Activated CD4-positive, alpha-beta memory T cell treated with anti-CD3 and anti-CD28 coated beads, Interleukin-2, amount 10 ng/mL, durations not matched to agents 7 days and 5 days (primary cell): ENCODE measurements at regions of chr3 and their contacts with region 1.

Region 1: GRCh38 chr3:44529927-44530326 is 25.1 kb upstream of the ZKSCAN7 start:
- DNase-seq: peak; percentile 24
- H3K4me3 Mint-ChIP-seq: no peak overlapping the region
- H3K27ac Mint-ChIP-seq: no peak overlapping the region
- H3K4me1 Mint-ChIP-seq: no peaks in the 10 kb centered on the region
- H3K27me3 Mint-ChIP-seq: peaks cover 7% of the 10 kb centered on the region

Region 2: GRCh38 chr3:44576613-44577012 is 46.7 kb after region 1 on chr3:
- CTCF ChIA-PET with region 1: no interaction called
- POLR2A ChIA-PET with region 1: no interaction called
- DNase-seq: no peak
- H3K4me3 Mint-ChIP-seq: no peak overlapping the region
- H3K27ac Mint-ChIP-seq: no peak overlapping the region
- H3K4me1 Mint-ChIP-seq: no peaks in the 10 kb centered on the region
- H3K27me3 Mint-ChIP-seq: no peaks in the 10 kb centered on the region

Region 3: GRCh38 chr3:44913868-44914468 is 384.0 kb after region 1 on chr3:
- CTCF ChIA-PET with region 1: interaction called, 34 read pairs
- POLR2A ChIA-PET with region 1: no interaction called
- DNase-seq: peak; percentile 65
- H3K4me3 Mint-ChIP-seq: no peak overlapping the region
- H3K27ac Mint-ChIP-seq: no peak overlapping the region
- H3K4me1 Mint-ChIP-seq: no peaks in the 10 kb centered on the region
- H3K27me3 Mint-ChIP-seq: peaks cover 12% of the 10 kb centered on the region